ENCODE measurements at regions of chr6 and their contacts with region 1.

Region 1: DNA sequence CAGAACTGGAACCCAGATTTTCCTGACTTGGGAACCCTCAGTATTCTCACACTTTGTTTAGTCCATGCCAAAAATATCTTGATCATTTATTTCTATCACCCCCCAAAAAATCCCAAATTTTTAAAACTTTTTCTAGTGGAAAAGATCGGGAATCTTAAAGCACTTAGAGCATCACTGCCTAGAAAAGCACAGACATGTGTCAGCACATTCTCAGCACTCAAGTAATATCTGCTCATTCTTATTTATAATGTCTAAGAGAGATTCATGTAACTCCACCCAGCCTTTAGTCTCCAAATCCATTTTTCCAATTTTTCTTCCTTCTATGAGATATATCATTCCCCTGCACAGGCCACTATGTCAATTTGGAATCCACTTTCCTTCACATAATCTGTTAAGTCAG is 29.9 kb upstream of the HSF2 start:
- DNase-seq: no peak
- H3K4me3 ChIP-seq: no peak overlapping the region
- H3K27ac ChIP-seq: no peak overlapping the region
- H3K4me1 ChIP-seq: no peaks in the 10 kb centered on the region
- H3K27me3 ChIP-seq: no peaks in the 10 kb centered on the region
- CTCF ChIP-seq: no peak

Region 2: DNA sequence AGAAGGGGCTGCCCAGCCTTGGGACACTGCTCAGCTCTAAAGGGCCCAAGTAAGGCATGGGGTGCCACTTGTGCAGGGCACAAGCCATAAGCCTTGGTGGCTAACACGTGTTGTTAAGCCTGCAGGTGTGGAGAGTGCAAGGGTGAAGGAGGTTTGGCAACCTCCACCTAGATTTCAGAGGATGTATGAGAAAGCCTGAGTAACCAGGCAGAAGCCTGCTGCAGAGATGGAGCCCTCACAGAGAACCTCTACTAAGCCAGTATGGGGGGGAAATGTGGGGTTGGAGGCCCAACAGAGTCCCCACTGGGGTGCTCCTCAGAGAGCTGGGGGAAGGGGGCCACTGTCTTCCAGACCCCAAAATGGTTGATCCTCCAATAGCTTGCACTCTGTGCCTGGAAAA is 69.4 kb after region 1 on chr6:
- intact Hi-C with region 1: loop called (anchors 2 kb)
- DNase-seq: no peak
- H3K4me3 ChIP-seq: no peak overlapping the region
- H3K27ac ChIP-seq: no peak overlapping the region
- H3K4me1 ChIP-seq: no peaks in the 10 kb centered on the region
- H3K27me3 ChIP-seq: no peaks in the 10 kb centered on the region
- CTCF ChIP-seq: no peak

Measured in tibial artery (tissue), 4 donors.